Astrocyte of the cerebellum (primary cell): ENCODE measurements at regions of chr6 and their contacts with region 1.

Region 1: DNA sequence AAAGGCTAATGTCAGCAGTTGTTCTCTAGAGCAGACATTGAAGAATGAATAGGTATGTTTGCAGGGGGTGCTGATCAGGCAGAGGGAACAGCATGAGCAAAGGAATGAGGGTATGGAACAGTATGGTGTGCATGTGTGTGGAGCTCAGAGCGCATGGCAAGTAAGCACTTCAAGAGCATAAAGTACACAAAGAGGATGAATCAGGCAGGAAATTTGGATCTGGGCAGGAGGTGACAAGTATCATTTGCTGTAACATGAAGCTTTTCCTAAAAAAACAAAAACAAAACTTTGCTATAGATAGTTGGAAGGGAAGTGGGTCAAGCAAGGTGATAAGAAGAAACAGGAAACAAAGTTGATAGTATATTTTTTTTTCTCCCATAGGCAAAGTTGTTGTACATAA is 746.8 kb downstream of the HDGFL1 start:
- DNase-seq: no peak
- H3K4me3 ChIP-seq: no peak overlapping the region
- CTCF ChIP-seq: no peak

Region 2: GRCh38 chr6:23380465-23380864 is 64.3 kb after region 1 on chr6:
- in situ Hi-C with region 1: loop called (anchors 5 kb)
- DNase-seq: no peak
- H3K4me3 ChIP-seq: no peak overlapping the region
- CTCF ChIP-seq: no peak